ENCODE measurements at regions of chr2 and their contacts with region 1.

Region 1: DNA sequence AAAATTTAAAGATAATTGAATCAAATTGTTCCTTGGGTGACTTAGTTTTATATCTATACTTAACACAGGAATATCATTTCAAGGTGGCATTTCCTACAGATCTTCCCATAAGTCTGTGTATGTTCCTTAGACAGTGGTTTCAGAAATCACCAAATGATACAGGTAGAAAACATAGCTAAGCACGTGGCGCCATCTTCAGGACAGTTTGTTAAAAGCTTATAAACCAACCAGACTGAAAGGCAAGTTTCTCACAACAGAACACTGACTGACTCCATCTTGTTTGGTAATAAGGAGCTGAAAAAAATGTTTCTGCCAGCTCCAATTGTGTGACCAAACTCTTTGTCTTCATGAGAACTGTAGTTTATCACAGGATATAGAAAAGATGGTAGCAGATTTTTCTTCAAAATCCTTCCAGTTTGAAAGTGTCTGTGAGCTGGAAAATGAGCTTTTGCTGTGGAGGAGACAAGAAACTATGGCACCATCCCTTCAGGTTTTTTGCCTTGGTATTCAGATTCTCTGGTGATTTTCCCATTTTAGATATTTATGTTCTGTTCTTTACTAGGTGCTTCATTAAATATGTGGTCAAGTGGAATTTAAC is 34.8 kb upstream of the NEUROD1 start:
- DNase-seq: peak; percentile 85
- ATAC-seq: peak; percentile 93
- H3K4me3 ChIP-seq: no peak overlapping the region
- H3K27ac ChIP-seq: no peak overlapping the region
- H3K4me1 ChIP-seq: no peaks in the 10 kb centered on the region; a peak in 1 of 4 replicates
- H3K27me3 ChIP-seq: no peaks in the 10 kb centered on the region
- CTCF ChIP-seq: peak; percentile 56 to 84 (median 77)
- POLR2A ChIP-seq: no peak
- RAD21 ChIP-seq: peak; percentile 96

Region 2: GRCh38 chr2:180125245-180125962 is 1589.7 kb before region 1 on chr2:
- CTCF ChIA-PET with region 1: interaction called, 24 read pairs
- POLR2A ChIA-PET with region 1: no interaction called
- RAD21 ChIA-PET with region 1: interaction called, 3 to 7 read pairs
- intact Hi-C with region 1: loop called (anchors 2 kb)
- DNase-seq: peak; percentile 84
- ATAC-seq: peak; percentile 92
- H3K4me3 ChIP-seq: 0 out of 4 replicates have a peak overlapping the region, but pooled peaks of 1 of the 2 experiments have one; percentile 9
- H3K27ac ChIP-seq: no peak overlapping the region
- H3K4me1 ChIP-seq: peaks cover 0 to 14% of the 10 kb centered on the region in 2 experiments; a peak in 2 of 4 replicates
- H3K27me3 ChIP-seq: no peaks in the 10 kb centered on the region
- CTCF ChIP-seq: peak; percentile 65 to 75 (median 72); a peak in 5 of 6 replicates
- POLR2A ChIP-seq: no peak
- RAD21 ChIP-seq: peak; percentile 90

Region 3: DNA sequence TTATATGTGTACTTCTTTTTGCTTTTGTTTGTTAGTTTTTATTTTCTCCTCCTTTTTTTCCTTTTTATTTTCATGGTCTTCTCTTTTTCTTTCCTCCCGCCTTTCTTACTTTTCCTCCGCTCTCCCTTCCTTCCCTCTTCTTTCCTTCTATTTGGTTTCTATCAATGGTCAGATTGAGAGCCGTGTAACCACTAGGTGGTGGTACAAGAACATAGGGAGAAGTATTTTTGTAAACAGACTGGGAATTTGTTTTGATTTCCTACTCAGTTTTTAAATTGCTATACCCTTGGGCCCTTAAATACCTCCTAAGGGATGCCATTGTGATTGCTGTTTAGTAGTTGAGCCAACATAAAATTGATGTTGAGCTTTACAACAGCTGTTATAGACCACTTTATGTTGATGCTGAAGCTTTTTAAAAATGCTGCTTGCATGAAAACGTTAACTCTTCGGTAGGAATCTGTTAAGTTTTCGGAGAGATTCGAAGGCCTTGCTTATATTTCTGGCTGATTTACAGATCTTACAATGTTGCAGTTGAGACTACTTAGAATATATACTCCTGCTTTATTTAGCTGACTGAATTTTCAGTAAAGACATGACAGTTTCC is 610.5 kb before region 1 on chr2:
- CTCF ChIA-PET with region 1: interaction called, 35 read pairs
- POLR2A ChIA-PET with region 1: no interaction called
- RAD21 ChIA-PET with region 1: interaction called in 1 of 2 experiments, 3 read pairs
- intact Hi-C with region 1: loop called (anchors 1 kb)
- DNase-seq: peak; percentile 51
- ATAC-seq: peak; percentile 57
- H3K4me3 ChIP-seq: no peak overlapping the region
- H3K27ac ChIP-seq: no peak overlapping the region
- H3K4me1 ChIP-seq: peaks cover 28 to 47% of the 10 kb centered on the region in 2 experiments
- H3K27me3 ChIP-seq: no peaks in the 10 kb centered on the region
- CTCF ChIP-seq: peak; percentile 70 to 89 (median 82); a peak in 5 of 6 replicates
- POLR2A ChIP-seq: no peak
- RAD21 ChIP-seq: peak; percentile 92

Region 4: DNA sequence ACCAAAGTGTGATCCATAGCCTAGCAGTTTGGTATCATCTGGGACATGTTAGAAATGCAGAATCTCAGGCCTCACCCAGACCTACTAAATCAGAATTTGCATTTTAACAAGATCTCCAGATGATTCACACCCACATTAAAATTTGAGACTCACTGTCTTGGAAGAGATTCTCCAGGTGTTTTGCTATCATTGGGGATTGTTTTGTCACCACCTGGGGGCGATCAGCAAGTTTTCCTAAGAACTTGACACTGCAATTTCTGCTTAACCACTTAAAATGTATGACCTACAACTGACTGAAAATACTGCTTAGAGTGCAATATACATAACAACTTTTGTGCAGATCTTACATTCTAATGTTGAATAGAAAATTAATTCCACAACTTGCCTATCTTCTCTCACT is 276.9 kb before region 1 on chr2:
- CTCF ChIA-PET with region 1: interaction called, 4 read pairs
- POLR2A ChIA-PET with region 1: no interaction called
- RAD21 ChIA-PET with region 1: no interaction called
- intact Hi-C with region 1: loop called (anchors 2 kb)
- DNase-seq: peak; percentile 35
- ATAC-seq: peak; percentile 81
- H3K4me3 ChIP-seq: no peak overlapping the region
- H3K27ac ChIP-seq: no peak overlapping the region
- H3K4me1 ChIP-seq: no peaks in the 10 kb centered on the region
- H3K27me3 ChIP-seq: no peaks in the 10 kb centered on the region
- CTCF ChIP-seq: peak; percentile 35 to 64 (median 62); a peak in 5 of 6 replicates
- POLR2A ChIP-seq: no peak
- RAD21 ChIP-seq: peak; percentile 50

Region 5: GRCh38 chr2:181573140-181573736 is 141.9 kb before region 1 on chr2:
- CTCF ChIA-PET with region 1: interaction called, 65 read pairs
- POLR2A ChIA-PET with region 1: no interaction called
- RAD21 ChIA-PET with region 1: interaction called, 4 to 10 read pairs
- intact Hi-C with region 1: loop called (anchors 1 kb)
- DNase-seq: peak; percentile 54
- ATAC-seq: peak; percentile 82
- H3K4me3 ChIP-seq: no peak overlapping the region
- H3K27ac ChIP-seq: no peak overlapping the region
- H3K4me1 ChIP-seq: peaks cover 0 to 5% of the 10 kb centered on the region in 2 experiments; a peak in 2 of 4 replicates
- H3K27me3 ChIP-seq: no peaks in the 10 kb centered on the region
- CTCF ChIP-seq: peak; percentile 49 to 74 (median 68); a peak in 4 of 6 replicates
- POLR2A ChIP-seq: no peak
- RAD21 ChIP-seq: peak; percentile 84

Region 6: DNA sequence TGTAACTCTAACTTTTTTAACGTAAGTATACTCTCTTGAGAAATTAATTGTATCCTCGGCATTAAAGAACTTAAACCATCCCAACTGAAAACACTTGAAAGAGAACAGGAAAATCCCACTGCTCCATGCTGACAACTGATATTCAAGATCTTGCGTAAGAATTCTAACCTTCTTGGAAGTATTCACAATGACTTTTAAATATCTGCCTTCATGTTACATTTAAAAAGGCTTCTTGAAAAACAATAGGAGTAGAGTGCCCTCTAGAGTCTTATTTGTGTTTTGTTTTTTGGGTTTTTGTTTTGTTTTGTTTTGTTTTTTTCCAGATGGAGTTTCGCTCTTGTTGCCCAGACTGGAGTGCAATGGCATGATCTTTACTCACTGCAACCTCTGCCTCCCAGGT is 935.6 kb after region 1 on chr2:
- CTCF ChIA-PET with region 1: interaction called, 4 read pairs
- POLR2A ChIA-PET with region 1: no interaction called
- RAD21 ChIA-PET with region 1: no interaction called
- intact Hi-C with region 1: loop called (anchors 2 kb)
- DNase-seq: peak; percentile 40
- ATAC-seq: peak; percentile 35
- H3K4me3 ChIP-seq: no peak overlapping the region
- H3K27ac ChIP-seq: no peak overlapping the region
- H3K4me1 ChIP-seq: no peaks in the 10 kb centered on the region
- H3K27me3 ChIP-seq: no peaks in the 10 kb centered on the region
- CTCF ChIP-seq: peak; percentile 22 to 65 (median 61); a peak in 3 of 6 replicates
- POLR2A ChIP-seq: no peak
- RAD21 ChIP-seq: peak; percentile 82